ENCODE measurements at regions of chr10 and their contacts with region 1.

Region 1: GRCh38 chr10:66180581-66181318 is 745.1 kb upstream of the LRRTM3 start:
- DNase-seq: peak; percentile 21
- H3K4me3 ChIP-seq: no peak overlapping the region
- H3K27ac ChIP-seq: no peak overlapping the region
- H3K27me3 ChIP-seq: no peaks in the 10 kb centered on the region
- CTCF ChIP-seq: peak; percentile 63

Region 2: GRCh38 chr10:66228887-66229286 is 48.1 kb after region 1 on chr10:
- CTCF ChIA-PET with region 1: no interaction called
- POLR2A ChIA-PET with region 1: no interaction called
- DNase-seq: no peak
- H3K4me3 ChIP-seq: no peak overlapping the region
- H3K27ac ChIP-seq: no peak overlapping the region
- H3K27me3 ChIP-seq: no peaks in the 10 kb centered on the region
- CTCF ChIP-seq: no peak

Region 3: GRCh38 chr10:66244953-66245352 is 64.2 kb after region 1 on chr10:
- CTCF ChIA-PET with region 1: no interaction called
- POLR2A ChIA-PET with region 1: no interaction called
- DNase-seq: no peak
- H3K4me3 ChIP-seq: no peak overlapping the region
- H3K27ac ChIP-seq: no peak overlapping the region
- H3K27me3 ChIP-seq: no peaks in the 10 kb centered on the region
- CTCF ChIP-seq: no peak

Region 4: GRCh38 chr10:66440568-66440967 is 259.8 kb after region 1 on chr10:
- CTCF ChIA-PET with region 1: no interaction called
- POLR2A ChIA-PET with region 1: no interaction called
- DNase-seq: no peak
- H3K4me3 ChIP-seq: no peak overlapping the region
- H3K27ac ChIP-seq: no peak overlapping the region
- H3K27me3 ChIP-seq: no peaks in the 10 kb centered on the region
- CTCF ChIP-seq: no peak

Region 5: GRCh38 chr10:66931340-66931948 is 750.7 kb after region 1 on chr10:
- CTCF ChIA-PET with region 1: interaction called, 15 read pairs
- POLR2A ChIA-PET with region 1: no interaction called
- DNase-seq: peak; percentile 41
- H3K4me3 ChIP-seq: no peak overlapping the region
- H3K27ac ChIP-seq: no peak overlapping the region
- H3K27me3 ChIP-seq: peaks cover 18% of the 10 kb centered on the region
- CTCF ChIP-seq: peak; percentile 85